GM12878 (cell line): ENCODE measurements at regions of chr5 and their contacts with region 1.

Region 1: DNA sequence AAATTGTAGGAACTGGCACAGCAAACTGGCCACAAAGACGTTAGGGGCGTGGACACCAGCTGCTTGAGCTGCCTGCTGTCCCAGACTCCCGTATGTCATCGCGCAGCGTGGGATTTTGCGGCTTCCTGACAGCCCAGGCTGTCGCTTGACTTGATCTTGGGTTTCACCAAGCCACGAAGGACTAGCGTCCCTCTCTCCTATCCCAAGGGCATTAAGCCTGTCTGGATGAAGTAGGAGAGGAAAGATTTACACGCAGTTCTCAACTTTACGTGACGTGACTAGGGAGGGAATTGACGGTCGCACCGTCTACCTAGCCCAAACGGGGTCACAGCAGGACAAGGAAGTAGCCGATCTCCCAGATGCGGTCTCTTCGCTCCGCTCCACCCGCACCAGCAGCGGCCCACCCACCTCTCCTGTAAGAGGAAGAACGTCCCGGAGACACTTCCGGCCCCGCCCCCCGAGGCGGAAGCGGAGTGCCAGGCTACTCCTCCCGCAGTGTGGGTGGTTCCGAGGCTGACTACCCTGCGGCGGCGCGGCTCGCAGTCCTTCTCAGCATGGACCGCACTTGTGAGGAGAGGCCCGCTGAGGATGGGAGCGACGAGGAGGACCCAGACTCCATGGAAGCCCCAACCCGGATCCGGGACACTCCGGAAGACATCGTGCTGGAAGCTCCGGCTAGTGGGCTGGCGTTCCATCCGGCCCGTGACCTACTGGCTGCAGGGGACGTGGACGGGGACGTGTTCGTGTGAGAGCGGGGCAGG is at the start of gene WDR55:
- DNase-seq: peak; percentile 71
- ATAC-seq: peak; percentile 98
- H3K4me3 ChIP-seq: peak within 1 kb of the TSS; percentile 96
- H3K27ac ChIP-seq: peak within 1 kb of the TSS; percentile 85
- H3K4me1 ChIP-seq: no peaks in the 10 kb centered on the region
- H3K27me3 ChIP-seq: no peaks in the 10 kb centered on the region
- CTCF ChIP-seq: no peak
- EP300 ChIP-seq: peak in 1 of 2 experiments; percentile 3; a peak in 1 of 4 replicates
- POLR2A ChIP-seq: peak; percentile 98
- RAD21 ChIP-seq: no peak
- polyA plus RNA-seq, gene WDR55: 3.4 to 3.7 TPM

Region 2: DNA sequence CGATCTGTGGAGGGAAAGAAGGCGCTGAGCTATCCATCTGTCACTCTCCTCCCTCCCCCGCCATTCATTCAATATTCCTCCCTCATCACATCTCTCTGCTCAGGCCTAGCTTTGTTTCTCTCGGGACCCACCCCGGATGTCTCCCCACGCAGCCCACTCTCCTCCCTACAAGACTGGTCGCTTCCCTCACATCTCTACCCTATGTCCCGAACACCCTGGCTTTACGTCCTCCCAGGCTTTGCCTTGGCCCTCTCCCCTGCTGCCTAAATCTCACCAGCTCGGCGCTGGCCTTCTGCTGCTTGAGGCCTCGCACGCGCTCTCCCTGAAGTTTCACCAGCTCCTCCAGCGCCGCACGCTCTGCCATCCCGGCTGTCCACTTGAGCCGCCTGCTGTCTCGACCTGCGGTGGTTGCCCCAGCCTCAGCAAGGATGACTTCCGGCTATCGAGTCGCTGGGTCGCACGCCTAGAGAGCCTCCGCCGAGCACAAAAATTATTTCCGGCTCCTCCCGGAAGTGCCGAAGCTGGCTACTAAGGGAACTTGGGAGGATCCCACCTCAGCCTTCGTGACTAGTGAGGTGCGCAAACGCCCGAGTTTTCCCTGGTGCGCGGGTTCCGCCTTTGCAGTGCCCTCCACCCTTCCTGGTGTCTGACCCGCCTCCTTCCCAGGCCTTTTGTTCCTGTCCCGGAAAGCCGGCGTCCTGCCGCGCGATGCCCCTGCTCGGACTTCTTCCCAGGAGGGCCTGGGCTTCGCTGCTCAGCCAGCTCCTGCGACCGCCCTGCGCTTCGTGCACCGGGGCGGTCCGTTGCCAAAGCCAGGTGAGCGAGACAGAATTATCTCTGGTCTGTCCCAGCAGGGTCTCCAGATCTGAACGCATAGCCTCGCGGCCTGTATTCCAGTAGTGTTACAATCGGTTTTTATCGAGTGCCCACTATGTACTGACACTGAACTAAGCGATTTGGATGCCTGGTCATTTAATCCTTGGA is 26.7 kb after region 1 on chr5 and contains the starts of genes HARS1 and HARS2:
- CTCF ChIA-PET with region 1: interaction called, 4 read pairs
- POLR2A ChIA-PET with region 1: interaction called, 12 read pairs
- RAD21 ChIA-PET with region 1: interaction called, 3 read pairs
- SMC1A ChIA-PET with region 1: no interaction called
- in situ Hi-C with region 1: no loop called
- intact Hi-C with region 1: no loop called
- DNase-seq: peak; percentile 77
- ATAC-seq: peak; percentile 96
- H3K4me3 ChIP-seq: peak within 1 kb of the TSS; percentile 89
- H3K27ac ChIP-seq: peak within 1 kb of the TSS; percentile 74
- H3K4me1 ChIP-seq: peaks cover 4% of the 10 kb centered on the region; the same call in 1 of the 2 replicates
- H3K27me3 ChIP-seq: no peaks in the 10 kb centered on the region
- CTCF ChIP-seq: no peak
- EP300 ChIP-seq: no peak
- POLR2A ChIP-seq: peak; percentile 97
- RAD21 ChIP-seq: no peak
- polyA plus RNA-seq, gene HARS1: 12.0 to 17.3 TPM
- polyA plus RNA-seq, gene HARS2: 9.3 to 13.1 TPM